GM12878 (cell line): ENCODE measurements at regions of chr4 and their contacts with region 1.

Region 1: DNA sequence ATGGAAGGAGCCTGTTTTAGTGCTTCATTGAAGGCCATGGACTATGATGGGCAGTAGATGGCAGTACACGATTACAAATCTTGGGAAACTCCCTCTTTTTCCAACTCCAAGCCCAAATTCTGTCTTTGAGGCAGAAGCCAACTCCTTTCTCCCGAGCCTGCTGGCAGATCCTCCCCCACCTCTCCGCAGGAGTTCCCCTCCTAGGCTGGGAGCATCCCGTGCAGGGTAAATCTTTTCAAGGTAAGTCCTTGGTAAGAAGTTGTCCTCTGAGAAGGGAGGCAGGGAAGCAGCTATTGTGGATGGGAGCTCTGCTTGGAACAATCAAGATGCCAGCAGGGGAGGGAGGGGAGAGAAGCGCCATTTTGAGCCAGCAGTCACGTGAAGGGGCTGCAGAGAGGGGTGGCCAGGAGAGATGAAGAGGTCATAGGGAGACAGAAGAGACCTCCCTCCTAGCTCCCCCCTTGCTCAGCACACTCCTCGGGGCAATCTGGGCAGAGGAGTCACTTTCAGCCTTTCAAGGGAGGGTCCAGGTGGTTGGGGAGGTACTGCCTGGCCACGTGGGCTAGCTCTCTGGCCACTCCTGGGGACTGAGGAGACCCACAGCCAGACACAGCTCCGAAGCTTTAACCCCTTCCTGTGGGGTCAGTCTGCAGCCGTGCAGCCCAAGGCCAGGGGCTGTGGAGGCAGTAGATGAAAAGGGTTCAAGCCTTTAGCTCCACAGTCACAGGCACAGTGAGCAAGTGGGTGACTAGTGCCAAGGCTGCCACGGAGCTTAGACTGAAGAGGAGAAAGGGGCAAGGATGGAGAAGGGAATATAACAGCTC is 9.6 kb downstream of the CC2D2A start:
- DNase-seq: no peak
- ATAC-seq: peak; percentile 84
- H3K4me3 ChIP-seq: no peak overlapping the region
- H3K27ac ChIP-seq: no peak overlapping the region
- H3K4me1 ChIP-seq: no peaks in the 10 kb centered on the region
- H3K27me3 ChIP-seq: no peaks in the 10 kb centered on the region
- CTCF ChIP-seq: peak; percentile 51 to 74 (median 57); a peak in 5 of 6 replicates
- EP300 ChIP-seq: no peak
- POLR2A ChIP-seq: no peak
- RAD21 ChIP-seq: peak; percentile 79

Region 2: GRCh38 chr4:15729910-15730533 is 250.7 kb after region 1 on chr4:
- CTCF ChIA-PET with region 1: interaction called, 4 read pairs
- POLR2A ChIA-PET with region 1: no interaction called
- RAD21 ChIA-PET with region 1: no interaction called
- SMC1A ChIA-PET with region 1: interaction called, 7 read pairs
- in situ Hi-C with region 1: no loop called
- intact Hi-C with region 1: loop called (anchors 2 kb)
- DNase-seq: peak; percentile 2
- ATAC-seq: peak; percentile 84
- H3K4me3 ChIP-seq: no peak overlapping the region
- H3K27ac ChIP-seq: no peak overlapping the region
- H3K4me1 ChIP-seq: no peaks in the 10 kb centered on the region
- H3K27me3 ChIP-seq: no peaks in the 10 kb centered on the region; a peak in 1 of 4 replicates
- CTCF ChIP-seq: peak; percentile 69 to 77 (median 74)
- EP300 ChIP-seq: no peak
- POLR2A ChIP-seq: no peak
- RAD21 ChIP-seq: peak; percentile 92